PC-3 (cell line): ENCODE measurements at regions of chr19 and their contacts with region 1.

Region 1: DNA sequence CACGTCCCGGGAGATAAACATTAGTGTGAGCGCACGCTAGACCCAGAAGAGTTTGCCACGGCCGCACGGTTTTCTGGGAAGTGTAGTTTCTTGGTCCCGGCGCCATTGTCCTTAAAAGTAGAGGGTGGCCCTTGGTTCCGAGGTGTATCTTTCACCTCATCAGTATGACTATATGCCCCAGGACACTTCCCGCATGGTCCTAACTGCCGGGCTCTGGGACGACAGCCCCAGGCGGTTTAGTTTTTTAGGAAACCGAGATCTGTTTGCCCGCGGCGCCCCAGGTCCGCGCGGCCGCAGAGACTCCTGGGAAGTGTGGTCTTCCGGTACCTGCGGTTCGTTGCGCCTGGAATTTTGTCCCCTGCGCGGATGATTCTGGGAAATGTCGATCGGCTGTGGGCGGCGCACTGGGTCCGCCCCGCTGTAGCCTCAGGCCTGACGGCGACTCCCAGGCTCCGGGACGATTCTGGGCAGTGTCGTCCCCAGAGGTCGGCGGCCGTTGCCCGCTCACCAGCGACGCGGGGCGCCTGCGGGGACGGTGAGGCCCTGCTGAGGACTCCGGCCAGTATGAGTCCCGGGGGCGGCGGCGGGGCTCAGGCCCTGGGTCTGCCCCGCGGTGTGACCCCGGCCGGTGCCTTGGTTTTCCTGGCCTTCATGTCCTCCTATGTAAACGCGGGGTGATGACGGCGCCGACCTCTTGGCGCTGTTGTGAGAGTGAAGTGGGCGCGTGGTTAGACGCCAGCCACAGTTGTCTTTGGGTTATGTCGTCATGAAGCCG is at the start of gene ZNF181:
- DNase-seq: peak; percentile 79
- ATAC-seq: peak; percentile 95
- H3K4me3 ChIP-seq: peak within 1 kb of the TSS; percentile 88
- H3K27ac ChIP-seq: peak within 1 kb of the TSS; percentile 74
- H3K4me1 ChIP-seq: no peaks in the 10 kb centered on the region
- H3K27me3 ChIP-seq: no peaks in the 10 kb centered on the region
- CTCF ChIP-seq: no peak
- total RNA-seq, gene ZNF181: 2.8 and 17.2 TPM in 2 replicates

Region 2: GRCh38 chr19:34523408-34523807 is 210.6 kb before region 1 on chr19:
- CTCF ChIA-PET with region 1: no interaction called
- POLR2A ChIA-PET with region 1: no interaction called
- intact Hi-C with region 1: no loop called
- DNase-seq: no peak
- ATAC-seq: no peak
- H3K4me3 ChIP-seq: no peak overlapping the region
- H3K27ac ChIP-seq: no peak overlapping the region
- H3K4me1 ChIP-seq: no peaks in the 10 kb centered on the region
- H3K27me3 ChIP-seq: peaks cover 4% of the 10 kb centered on the region; the same call in 1 of the 2 replicates
- CTCF ChIP-seq: no peak

Region 3: DNA sequence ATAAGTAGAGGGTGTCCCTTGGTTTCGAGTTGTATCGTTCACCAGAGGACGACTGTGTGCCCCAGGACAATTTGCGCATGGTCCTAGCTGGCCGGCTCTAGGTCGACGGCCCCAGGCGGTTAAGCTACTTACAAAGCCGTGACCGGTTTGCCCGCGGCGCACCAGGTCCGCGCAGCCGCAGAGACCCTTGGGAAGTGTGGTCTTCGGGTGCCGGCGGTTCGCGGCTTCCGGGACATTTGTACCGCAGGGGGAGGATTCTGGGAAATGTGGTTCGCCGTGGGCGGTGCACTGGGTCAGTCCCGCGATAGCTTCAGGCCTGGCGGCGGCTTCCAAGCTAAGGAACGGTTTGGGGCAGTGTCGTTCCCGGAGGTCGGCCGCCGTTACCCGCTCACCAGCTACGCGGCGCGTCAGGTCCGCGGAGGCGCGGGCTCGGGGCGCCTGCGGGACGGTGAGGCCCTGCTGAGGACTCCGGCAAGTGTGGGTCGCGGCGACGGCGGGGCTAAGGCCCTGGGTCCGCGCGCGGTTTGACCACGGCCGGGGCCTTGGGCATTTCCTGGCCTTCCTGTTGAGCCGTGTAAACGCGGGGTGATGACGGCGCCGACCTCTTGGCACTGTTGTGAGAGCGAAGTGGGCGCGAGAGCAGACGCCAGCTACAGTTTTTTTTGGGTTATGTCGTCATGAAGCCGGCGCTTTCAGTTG is 56.5 kb before region 1 on chr19 and contains the start of gene ZNF302:
- CTCF ChIA-PET with region 1: no interaction called
- POLR2A ChIA-PET with region 1: interaction called, 8 read pairs
- intact Hi-C with region 1: loop called (anchors 2 kb)
- DNase-seq: peak; percentile 90
- ATAC-seq: peak; percentile 98
- H3K4me3 ChIP-seq: peak within 1 kb of the TSS; percentile 86
- H3K27ac ChIP-seq: peak within 1 kb of the TSS; percentile 81
- H3K4me1 ChIP-seq: peaks cover 16% of the 10 kb centered on the region
- H3K27me3 ChIP-seq: no peaks in the 10 kb centered on the region
- CTCF ChIP-seq: no peak
- total RNA-seq, gene ZNF302: 7.3 and 15.9 TPM in 2 replicates

Region 4: GRCh38 chr19:34744896-34745690 is 11.1 kb after region 1 on chr19:
- CTCF ChIA-PET with region 1: no interaction called
- POLR2A ChIA-PET with region 1: no interaction called
- intact Hi-C with region 1: no loop called
- DNase-seq: no peak
- ATAC-seq: no peak
- H3K4me3 ChIP-seq: no peak overlapping the region
- H3K27ac ChIP-seq: no peak overlapping the region
- H3K4me1 ChIP-seq: no peaks in the 10 kb centered on the region
- H3K27me3 ChIP-seq: no peaks in the 10 kb centered on the region
- CTCF ChIP-seq: no peak